BJ (cell line): ENCODE measurements at regions of chr2 and their contacts with region 1.

Region 1: GRCh38 chr2:101012706-101013181 is 10.7 kb downstream of the RPL31 start:
- DNase-seq: no peak
- H3K4me3 ChIP-seq: no peak overlapping the region
- H3K27me3 ChIP-seq: no peaks in the 10 kb centered on the region
- CTCF ChIP-seq: peak; percentile 70

Region 2: GRCh38 chr2:100752628-100753333 is 260.0 kb before region 1 on chr2:
- CTCF ChIA-PET with region 1: no interaction called
- POLR2A ChIA-PET with region 1: no interaction called
- DNase-seq: peak; percentile 64
- H3K4me3 ChIP-seq: no peak overlapping the region
- H3K27me3 ChIP-seq: no peaks in the 10 kb centered on the region
- CTCF ChIP-seq: no peak

Region 3: GRCh38 chr2:101001691-101002561 is 10.8 kb before region 1 on chr2 and contains the start of gene RPL31:
- CTCF ChIA-PET with region 1: interaction called, 22 read pairs
- POLR2A ChIA-PET with region 1: interaction called, 5 read pairs
- DNase-seq: peak; percentile 75
- H3K4me3 ChIP-seq: peak within 1 kb of the TSS; percentile 77
- H3K27me3 ChIP-seq: no peaks in the 10 kb centered on the region
- CTCF ChIP-seq: no peak
- polyA plus RNA-seq, gene RPL31: 1,622 and 3,206 TPM in 2 replicates

Region 4: DNA sequence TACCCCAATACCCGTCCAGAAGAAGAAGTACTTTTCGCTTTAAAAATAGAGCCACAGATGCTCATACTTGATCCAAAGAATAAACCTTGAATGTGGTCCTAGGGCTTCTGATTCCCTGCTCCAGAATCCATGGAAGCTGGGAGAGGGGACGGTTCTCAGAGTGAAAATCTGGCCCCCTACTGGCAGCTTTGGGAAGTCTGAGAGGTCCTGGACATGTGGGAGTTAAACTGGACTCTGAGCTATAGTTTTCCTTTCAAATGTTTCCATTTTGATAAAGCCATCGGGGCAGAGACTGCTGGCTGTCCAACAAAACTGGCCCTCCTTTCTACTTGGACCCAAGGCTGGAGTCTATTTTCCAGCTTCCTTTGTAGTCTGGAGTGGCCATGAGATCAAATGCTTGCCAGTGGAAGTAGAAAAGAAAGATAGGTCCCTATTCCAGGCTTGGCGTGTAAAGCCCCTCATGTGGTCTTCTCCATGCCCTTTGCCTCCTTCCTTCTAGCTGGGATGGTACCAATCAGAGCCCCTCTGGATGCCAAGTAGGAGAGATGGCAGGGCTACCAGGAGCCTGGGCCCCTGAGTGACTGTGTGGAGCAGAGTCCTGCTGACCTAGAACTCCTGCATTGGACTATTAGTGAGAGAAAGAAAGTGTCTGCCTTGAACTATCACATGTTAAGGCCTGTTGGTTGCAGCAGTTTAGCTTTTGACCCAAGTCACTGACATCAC is 176.1 kb after region 1 on chr2:
- CTCF ChIA-PET with region 1: interaction called, 5 read pairs
- POLR2A ChIA-PET with region 1: interaction called, 15 read pairs
- DNase-seq: no peak
- H3K4me3 ChIP-seq: no peak overlapping the region
- H3K27me3 ChIP-seq: peaks cover 3% of the 10 kb centered on the region
- CTCF ChIP-seq: peak; percentile 78